ENCODE measurements at regions of chr11 and their contacts with region 1.

Region 1: DNA sequence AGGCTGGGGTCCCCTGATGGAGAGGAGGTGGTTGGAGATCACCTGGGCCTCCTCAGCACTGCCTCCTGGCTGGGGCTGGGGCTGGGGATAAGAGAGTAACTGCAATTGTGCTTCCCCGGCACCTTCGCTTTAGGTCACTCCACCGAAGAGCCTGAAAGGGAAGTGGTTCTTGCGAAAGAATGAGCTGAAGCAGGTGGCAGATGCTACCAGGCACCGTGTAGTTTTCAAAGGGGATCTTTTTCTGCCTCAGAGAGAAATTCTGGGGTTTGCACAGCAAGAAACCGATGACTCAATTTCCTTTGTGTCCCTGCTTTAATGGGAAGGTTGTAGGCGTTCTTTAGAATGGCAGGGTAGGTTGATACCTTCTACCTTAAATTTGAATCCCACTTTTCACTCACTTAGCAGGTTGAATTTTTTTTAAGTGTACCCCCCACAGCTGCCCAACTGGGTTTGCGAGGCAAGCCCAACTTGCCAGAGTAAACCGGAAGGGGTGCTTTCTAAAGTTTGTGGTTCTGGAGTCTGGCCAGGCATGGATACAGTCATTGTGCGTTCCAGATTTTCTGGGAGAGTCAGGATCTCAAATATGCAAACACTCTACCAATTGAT is 5.3 kb downstream of the CD44 start:
- DNase-seq: no peak
- ATAC-seq: no peak

Region 2: GRCh38 chr11:35082321-35083182 is 61.7 kb before region 1 on chr11:
- intact Hi-C with region 1: no loop called
- DNase-seq: peak; percentile 69
- ATAC-seq: peak; percentile 87

Region 3: GRCh38 chr11:35106595-35106994 is 37.6 kb before region 1 on chr11:
- intact Hi-C with region 1: no loop called
- DNase-seq: no peak
- ATAC-seq: peak; percentile 29

Region 4: DNA sequence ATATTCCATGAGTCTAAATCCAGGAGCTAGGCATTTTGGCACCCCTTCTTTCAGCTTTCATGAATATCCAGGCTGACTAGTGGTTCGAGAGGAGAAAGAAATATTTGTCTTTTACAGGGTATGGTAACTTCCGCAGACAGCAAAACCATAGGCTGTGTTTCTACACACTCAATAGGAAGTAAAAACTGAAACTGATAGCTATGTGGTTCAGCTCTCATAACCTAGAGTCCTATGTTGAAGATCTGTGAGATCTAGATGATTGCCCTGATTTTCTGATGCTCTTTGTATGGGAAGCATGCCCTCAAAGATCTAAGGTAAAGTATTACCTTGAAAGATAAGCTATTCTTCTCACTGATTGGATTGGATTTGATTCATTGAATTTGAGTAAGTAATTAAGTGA is 113.0 kb after region 1 on chr11:
- intact Hi-C with region 1: no loop called
- DNase-seq: no peak
- ATAC-seq: no peak

Region 5: GRCh38 chr11:36306888-36307287 is 1162.6 kb after region 1 on chr11:
- intact Hi-C with region 1: loop called (anchors 10 kb)
- DNase-seq: no peak
- ATAC-seq: no peak

Region 6: DNA sequence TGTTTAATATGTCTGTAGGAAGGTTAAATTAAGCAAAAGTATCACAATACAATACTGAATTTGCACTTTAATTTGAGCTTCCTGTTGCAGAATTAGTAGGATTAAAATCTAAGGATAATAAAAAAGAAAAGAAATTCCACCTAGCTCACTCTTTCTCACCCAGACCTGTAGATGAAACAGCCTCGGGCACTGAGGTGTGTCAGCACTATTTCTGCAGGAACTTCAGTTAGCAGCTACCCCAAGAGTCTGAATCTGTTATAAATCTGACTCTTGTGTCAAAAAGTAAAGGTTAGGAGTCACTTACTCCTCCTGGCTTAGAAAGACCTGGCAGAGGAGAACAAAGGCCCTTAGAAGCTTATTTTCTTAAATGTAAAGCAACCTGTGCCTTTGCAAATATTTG is 1917.2 kb after region 1 on chr11:
- intact Hi-C with region 1: no loop called
- DNase-seq: no peak
- ATAC-seq: no peak